ENCODE measurements at regions of chr2 and their contacts with region 1.

Region 1: DNA sequence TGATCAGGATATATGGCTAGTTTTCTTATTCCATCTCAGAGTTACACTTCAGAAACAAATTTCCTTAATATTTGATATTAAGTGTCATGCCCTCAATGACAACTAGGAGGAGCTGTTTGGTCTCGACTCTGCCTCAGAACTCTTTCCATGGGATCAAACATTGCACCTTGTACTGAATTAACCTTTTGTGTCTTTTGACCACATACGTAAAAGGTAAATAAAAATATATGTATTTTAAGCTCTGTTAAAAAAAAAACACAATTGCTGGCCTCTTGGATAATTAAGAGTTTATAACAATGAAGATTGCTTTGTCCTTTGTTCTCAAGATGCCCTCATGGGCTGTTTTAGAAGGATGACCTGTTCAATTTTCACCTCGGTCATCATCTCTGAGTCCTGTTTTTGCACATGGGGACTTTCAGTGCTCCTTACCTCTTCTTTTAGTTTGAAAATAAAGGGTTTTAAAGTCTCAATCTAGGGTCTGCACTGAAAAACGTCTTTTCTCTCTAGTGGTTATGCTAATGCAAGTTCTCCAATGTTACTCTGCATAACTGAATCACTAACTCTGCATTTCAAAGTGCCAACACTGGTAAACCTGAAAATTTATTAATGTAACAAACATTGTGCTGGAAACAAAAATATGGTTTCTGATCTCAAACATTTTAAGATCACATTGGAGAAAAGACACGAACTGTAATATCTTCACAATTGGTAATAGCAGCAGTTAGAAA is 18.8 kb upstream of the FN1 start:
- DNase-seq: no peak
- ATAC-seq: peak; percentile 49 to 55
- H3K4me3 ChIP-seq: no peak overlapping the region
- H3K27ac ChIP-seq: no peak overlapping the region
- H3K4me1 ChIP-seq: no peaks in the 10 kb centered on the region
- H3K27me3 ChIP-seq: no peaks in the 10 kb centered on the region
- CTCF ChIP-seq: peak; percentile 75

Region 2: GRCh38 chr2:215764441-215765048 is 309.9 kb after region 1 on chr2:
- intact Hi-C with region 1: no loop called
- DNase-seq: no peak
- ATAC-seq: peak; percentile 77 to 87
- H3K4me3 ChIP-seq: no peak overlapping the region
- H3K27ac ChIP-seq: no peak overlapping the region
- H3K4me1 ChIP-seq: peaks cover 14% of the 10 kb centered on the region
- H3K27me3 ChIP-seq: no peaks in the 10 kb centered on the region
- CTCF ChIP-seq: no peak

Region 3: GRCh38 chr2:215920244-215921100 is 465.8 kb after region 1 on chr2:
- intact Hi-C with region 1: loop called (anchors 10 kb)
- DNase-seq: peak; percentile 61
- ATAC-seq: peak; percentile 94 to 96
- H3K4me3 ChIP-seq: no peak overlapping the region
- H3K27ac ChIP-seq: no peak overlapping the region
- H3K4me1 ChIP-seq: peaks cover 6% of the 10 kb centered on the region
- H3K27me3 ChIP-seq: no peaks in the 10 kb centered on the region
- CTCF ChIP-seq: peak; percentile 88